Endothelial cell of umbilical vein (primary cell): ENCODE measurements at regions of chr9 and their contacts with region 1.

Region 1: GRCh38 chr9:33290247-33291030 is at the start of gene NFX1:
- DNase-seq: peak; percentile 99
- H3K4me3 ChIP-seq: peak within 1 kb of the TSS; percentile 57 to 79 (median 78)
- H3K27ac ChIP-seq: peak within 1 kb of the TSS; percentile 92
- H3K4me1 ChIP-seq: peaks cover 13% of the 10 kb centered on the region
- H3K27me3 ChIP-seq: no peaks in the 10 kb centered on the region
- CTCF ChIP-seq: no peak
- POLR2A ChIP-seq: peak; percentile 95
- total RNA-seq, gene NFX1: 21.7 and 22.1 TPM in 2 replicates

Region 2: GRCh38 chr9:33329117-33329563 is 38.7 kb after region 1 on chr9:
- CTCF ChIA-PET with region 1: interaction called, 8 read pairs
- POLR2A ChIA-PET with region 1: no interaction called
- dilution Hi-C with region 1: no loop called
- intact Hi-C with region 1: loop called (anchors 2 kb)
- DNase-seq: peak; percentile 94
- H3K4me3 ChIP-seq: no peak overlapping the region
- H3K27ac ChIP-seq: peak overlapping the region; percentile 69
- H3K4me1 ChIP-seq: peaks cover 48% of the 10 kb centered on the region
- H3K27me3 ChIP-seq: no peaks in the 10 kb centered on the region
- CTCF ChIP-seq: no peak
- POLR2A ChIP-seq: no peak

Region 3: DNA sequence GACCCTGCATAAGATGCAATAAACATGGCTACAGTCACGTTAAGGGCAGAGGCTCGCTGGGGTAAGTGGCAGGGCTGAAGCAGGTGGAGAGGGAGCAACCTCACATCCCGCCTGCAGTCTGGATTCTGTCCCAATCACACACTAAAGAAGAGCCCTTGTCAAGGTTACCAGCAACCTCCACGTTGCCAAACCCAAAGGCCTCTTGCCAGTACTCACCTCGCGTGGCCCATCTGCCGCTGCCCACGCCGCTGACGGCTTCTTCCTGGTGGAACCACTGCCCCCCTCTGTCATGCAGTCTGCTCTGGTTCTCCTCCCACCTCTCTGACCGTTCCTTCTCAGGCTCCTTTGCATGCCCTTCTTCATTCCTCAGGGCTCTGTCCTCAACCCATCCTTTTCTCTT is 103.1 kb after region 1 on chr9:
- CTCF ChIA-PET with region 1: interaction called, 4 read pairs
- POLR2A ChIA-PET with region 1: interaction called, 10 read pairs
- dilution Hi-C with region 1: no loop called
- intact Hi-C with region 1: loop called (anchors 1 kb)
- DNase-seq: no peak
- H3K4me3 ChIP-seq: no peak overlapping the region
- H3K27ac ChIP-seq: no peak overlapping the region
- H3K4me1 ChIP-seq: peaks cover 5% of the 10 kb centered on the region
- H3K27me3 ChIP-seq: no peaks in the 10 kb centered on the region
- CTCF ChIP-seq: no peak
- POLR2A ChIP-seq: no peak

Region 4: DNA sequence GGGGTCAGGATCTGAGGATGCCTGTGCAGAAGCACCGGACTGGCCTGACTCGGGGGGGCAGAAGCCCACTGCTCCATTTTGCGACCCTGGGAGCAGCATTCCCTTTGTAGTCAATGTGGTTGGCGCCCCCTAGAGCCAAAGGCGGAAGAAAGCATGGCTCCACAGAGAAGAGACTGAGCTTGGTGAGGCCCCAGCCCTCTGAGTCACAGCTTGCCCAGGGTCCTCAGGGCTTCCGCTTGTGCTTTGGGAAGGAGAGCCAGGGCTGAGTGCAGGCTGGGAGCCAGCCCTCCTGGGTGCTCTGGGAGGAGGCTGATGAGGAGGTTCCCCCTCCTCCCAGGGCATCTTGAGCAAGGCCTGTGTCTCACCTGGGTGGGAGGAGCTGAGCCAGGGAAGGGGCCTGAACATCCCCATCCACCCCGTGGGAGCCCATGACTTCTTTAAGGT is 162.4 kb after region 1 on chr9:
- CTCF ChIA-PET with region 1: interaction called, 40 read pairs
- POLR2A ChIA-PET with region 1: no interaction called
- dilution Hi-C with region 1: no loop called
- intact Hi-C with region 1: loop called (anchors 1 kb)
- DNase-seq: peak; percentile 81
- H3K4me3 ChIP-seq: no peak overlapping the region
- H3K27ac ChIP-seq: peak overlapping the region; percentile 39
- H3K4me1 ChIP-seq: peaks cover 14% of the 10 kb centered on the region
- H3K27me3 ChIP-seq: peaks cover 0 to 2% of the 10 kb centered on the region in 2 experiments
- CTCF ChIP-seq: peak; percentile 82 to 94
- POLR2A ChIP-seq: no peak

Region 5: DNA sequence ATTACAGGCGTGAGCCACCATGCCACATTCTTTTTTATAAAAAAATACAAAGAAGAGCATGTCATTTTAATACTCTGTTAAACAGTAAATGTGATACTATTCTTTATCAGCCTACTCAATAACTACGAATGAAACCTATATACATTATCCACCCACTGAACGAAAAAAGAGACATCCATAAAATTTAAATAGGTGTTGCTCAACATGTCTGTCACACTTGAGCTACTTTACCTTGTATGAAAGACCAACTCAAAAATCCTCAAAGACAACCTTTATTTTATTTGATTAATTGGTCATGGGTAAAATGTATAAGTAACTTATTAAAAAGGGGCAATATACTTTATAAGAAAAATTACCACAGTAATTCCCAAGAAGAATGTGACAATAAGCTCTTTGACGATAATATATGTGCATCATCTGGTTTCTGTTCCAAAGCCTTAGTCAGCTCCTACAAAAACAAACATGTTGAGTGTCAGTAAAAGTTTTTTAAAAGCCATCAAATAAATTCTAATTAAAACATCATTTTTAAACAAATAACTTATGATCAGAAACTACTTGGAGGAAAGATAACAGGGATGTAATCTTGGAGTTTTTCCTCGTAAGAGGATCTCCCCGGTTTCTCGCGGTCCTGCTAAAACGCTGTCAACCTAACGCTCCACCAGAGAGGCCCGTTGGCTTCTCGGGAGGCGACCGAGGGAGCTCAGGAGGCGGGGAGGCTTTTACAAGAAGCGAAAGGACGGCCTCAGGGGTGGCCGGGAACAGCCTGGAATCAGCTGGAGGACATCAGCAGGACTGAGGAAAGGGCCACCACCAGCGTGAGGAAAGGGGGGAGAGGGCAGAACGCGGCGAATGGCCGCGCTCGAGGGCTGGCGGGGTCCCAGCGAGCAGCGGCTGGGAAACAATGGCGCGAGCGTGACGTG is 220.1 kb after region 1 on chr9:
- CTCF ChIA-PET with region 1: no interaction called
- POLR2A ChIA-PET with region 1: no interaction called
- dilution Hi-C with region 1: no loop called
- intact Hi-C with region 1: loop called (anchors 1 kb)
- DNase-seq: peak; percentile 78
- H3K4me3 ChIP-seq: peak overlapping the region; percentile 75 to 84 (median 79)
- H3K27ac ChIP-seq: peak overlapping the region; percentile 100
- H3K4me1 ChIP-seq: peaks cover 28% of the 10 kb centered on the region
- H3K27me3 ChIP-seq: no peaks in the 10 kb centered on the region
- CTCF ChIP-seq: no peak
- POLR2A ChIP-seq: peak; percentile 83